ENCODE measurements at regions of chr4 and their contacts with region 1.

Region 1: DNA sequence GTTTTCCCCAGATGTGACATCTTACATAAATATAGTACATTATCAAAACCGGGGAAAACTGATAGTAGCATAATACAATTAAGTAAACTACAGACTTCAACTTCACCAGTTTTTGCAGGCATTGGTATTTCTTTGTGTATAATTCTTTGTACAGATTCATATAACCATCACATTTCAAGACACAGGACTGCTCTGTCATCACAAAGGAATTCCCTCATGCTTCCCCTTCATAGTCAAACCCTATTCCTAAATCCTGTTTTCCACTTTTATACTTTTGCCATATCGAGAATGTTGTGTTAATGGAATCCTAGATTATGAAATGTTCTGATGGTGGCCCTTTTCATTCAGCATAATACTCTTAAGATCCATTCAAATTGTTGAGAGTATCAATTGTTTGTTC is 36.0 kb downstream of the STIM2 start:
- DNase-seq: no peak
- ATAC-seq: no peak
- H3K4me3 ChIP-seq: no peak overlapping the region
- H3K4me3 Mint-ChIP-seq: no peak overlapping the region
- H3K27ac ChIP-seq: no peak overlapping the region
- H3K27ac Mint-ChIP-seq: no peak overlapping the region
- H3K4me1 ChIP-seq: peaks cover 25% of the 10 kb centered on the region
- H3K4me1 Mint-ChIP-seq: peaks cover 69% of the 10 kb centered on the region
- H3K27me3 ChIP-seq: no peaks in the 10 kb centered on the region
- H3K27me3 Mint-ChIP-seq: no peaks in the 10 kb centered on the region
- CTCF ChIP-seq: no peak

Region 2: GRCh38 chr4:26217961-26218676 is 678.5 kb before region 1 on chr4:
- CTCF ChIA-PET with region 1: no interaction called
- POLR2A ChIA-PET with region 1: no interaction called
- intact Hi-C with region 1: no loop called
- DNase-seq: peak in 1 of 9 experiments; percentile 26
- ATAC-seq: no peak
- H3K4me3 ChIP-seq: no peak overlapping the region
- H3K4me3 Mint-ChIP-seq: no peak overlapping the region
- H3K27ac ChIP-seq: no peak overlapping the region
- H3K27ac Mint-ChIP-seq: no peak overlapping the region
- H3K4me1 ChIP-seq: no peaks in the 10 kb centered on the region
- H3K4me1 Mint-ChIP-seq: peaks cover 5% of the 10 kb centered on the region
- H3K27me3 ChIP-seq: no peaks in the 10 kb centered on the region
- H3K27me3 Mint-ChIP-seq: peaks cover 5% of the 10 kb centered on the region
- CTCF ChIP-seq: no peak

Region 3: GRCh38 chr4:26687728-26688127 is 208.9 kb before region 1 on chr4:
- CTCF ChIA-PET with region 1: no interaction called
- POLR2A ChIA-PET with region 1: interaction called, 12 read pairs
- intact Hi-C with region 1: no loop called
- DNase-seq: no peak
- ATAC-seq: no peak
- H3K4me3 ChIP-seq: no peak overlapping the region
- H3K4me3 Mint-ChIP-seq: no peak overlapping the region
- H3K27ac ChIP-seq: no peak overlapping the region
- H3K27ac Mint-ChIP-seq: no peak overlapping the region
- H3K4me1 ChIP-seq: no peaks in the 10 kb centered on the region
- H3K4me1 Mint-ChIP-seq: no peaks in the 10 kb centered on the region
- H3K27me3 ChIP-seq: no peaks in the 10 kb centered on the region
- H3K27me3 Mint-ChIP-seq: no peaks in the 10 kb centered on the region
- CTCF ChIP-seq: no peak

Region 4: GRCh38 chr4:26867914-26868684 is 28.5 kb before region 1 on chr4:
- CTCF ChIA-PET with region 1: no interaction called
- POLR2A ChIA-PET with region 1: no interaction called
- intact Hi-C with region 1: loop called (anchors 5 kb)
- DNase-seq: no peak
- ATAC-seq: no peak
- H3K4me3 ChIP-seq: no peak overlapping the region
- H3K4me3 Mint-ChIP-seq: peak overlapping the region; percentile 55
- H3K27ac ChIP-seq: peak overlapping the region in 1 of 2 experiments; percentile 24
- H3K27ac Mint-ChIP-seq: peak overlapping the region; percentile 50
- H3K4me1 ChIP-seq: peaks cover 87% of the 10 kb centered on the region
- H3K4me1 Mint-ChIP-seq: peaks cover 89% of the 10 kb centered on the region
- H3K27me3 ChIP-seq: no peaks in the 10 kb centered on the region
- H3K27me3 Mint-ChIP-seq: no peaks in the 10 kb centered on the region
- CTCF ChIP-seq: no peak

Region 5: GRCh38 chr4:26885912-26886274 is 10.7 kb before region 1 on chr4:
- CTCF ChIA-PET with region 1: interaction called, 6 read pairs
- POLR2A ChIA-PET with region 1: interaction called, 5 read pairs
- intact Hi-C with region 1: loop called in 1 of 2 experiments (anchors 1 kb)
- DNase-seq: peak in 4 of 9 experiments; percentile 39 to 89 (median 63)
- ATAC-seq: peak; percentile 67
- H3K4me3 ChIP-seq: peak overlapping the region; percentile 6 to 38
- H3K4me3 Mint-ChIP-seq: peak overlapping the region; percentile 81
- H3K27ac ChIP-seq: peak overlapping the region; percentile 68 to 92
- H3K27ac Mint-ChIP-seq: peak overlapping the region; percentile 97
- H3K4me1 ChIP-seq: peaks cover 57% of the 10 kb centered on the region
- H3K4me1 Mint-ChIP-seq: peaks cover 80% of the 10 kb centered on the region
- H3K27me3 ChIP-seq: no peaks in the 10 kb centered on the region
- H3K27me3 Mint-ChIP-seq: no peaks in the 10 kb centered on the region
- CTCF ChIP-seq: no peak

Region 6: DNA sequence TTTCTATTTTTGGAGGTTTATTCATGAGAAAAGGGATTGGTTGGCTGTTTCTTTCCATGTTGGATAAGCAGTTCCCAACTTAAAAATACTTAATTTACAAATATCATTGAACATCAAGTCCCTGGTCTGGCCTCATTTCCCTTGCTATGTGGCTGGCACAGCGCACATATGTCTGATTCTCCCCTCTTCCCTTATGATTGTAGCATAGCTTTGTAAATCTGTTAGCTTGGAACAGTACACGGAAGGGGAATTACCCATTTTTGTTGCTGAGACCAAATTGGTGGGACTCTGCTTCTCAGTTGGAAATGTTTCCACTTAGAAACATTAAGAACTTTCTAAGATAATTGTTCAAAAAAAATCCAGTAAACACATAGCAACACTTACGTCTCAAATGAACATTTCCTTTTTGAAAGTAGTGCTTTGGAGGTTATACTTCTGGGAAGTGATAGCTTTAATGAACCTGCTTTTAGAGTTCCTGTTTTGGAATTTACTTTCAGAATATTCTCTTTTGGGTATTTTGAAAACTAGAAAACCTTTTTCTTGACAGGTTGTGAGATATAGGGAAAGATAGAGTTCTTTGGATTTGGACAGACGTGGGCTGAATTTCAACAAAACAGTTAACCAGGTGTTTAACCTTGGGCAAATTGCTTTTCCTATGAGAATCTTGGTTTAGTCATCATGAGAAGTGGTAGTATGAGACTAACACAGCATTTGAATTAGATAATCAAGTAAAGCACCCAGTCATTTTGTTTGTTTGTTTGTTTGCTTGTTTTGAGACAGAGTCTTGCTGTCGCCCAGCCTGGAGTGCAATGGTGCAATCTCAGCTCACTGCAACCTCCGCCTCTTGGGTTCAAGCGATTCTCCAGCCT is 11.3 kb after region 1 on chr4:
- CTCF ChIA-PET with region 1: no interaction called
- POLR2A ChIA-PET with region 1: no interaction called
- intact Hi-C with region 1: loop called in 1 of 2 experiments (anchors 1 kb)
- DNase-seq: no peak
- ATAC-seq: no peak
- H3K4me3 ChIP-seq: no peak overlapping the region
- H3K4me3 Mint-ChIP-seq: no peak overlapping the region
- H3K27ac ChIP-seq: no peak overlapping the region
- H3K27ac Mint-ChIP-seq: peak overlapping the region; percentile 18
- H3K4me1 ChIP-seq: peaks cover 50% of the 10 kb centered on the region
- H3K4me1 Mint-ChIP-seq: peaks cover 82% of the 10 kb centered on the region
- H3K27me3 ChIP-seq: no peaks in the 10 kb centered on the region
- H3K27me3 Mint-ChIP-seq: no peaks in the 10 kb centered on the region
- CTCF ChIP-seq: no peak

Region 7: DNA sequence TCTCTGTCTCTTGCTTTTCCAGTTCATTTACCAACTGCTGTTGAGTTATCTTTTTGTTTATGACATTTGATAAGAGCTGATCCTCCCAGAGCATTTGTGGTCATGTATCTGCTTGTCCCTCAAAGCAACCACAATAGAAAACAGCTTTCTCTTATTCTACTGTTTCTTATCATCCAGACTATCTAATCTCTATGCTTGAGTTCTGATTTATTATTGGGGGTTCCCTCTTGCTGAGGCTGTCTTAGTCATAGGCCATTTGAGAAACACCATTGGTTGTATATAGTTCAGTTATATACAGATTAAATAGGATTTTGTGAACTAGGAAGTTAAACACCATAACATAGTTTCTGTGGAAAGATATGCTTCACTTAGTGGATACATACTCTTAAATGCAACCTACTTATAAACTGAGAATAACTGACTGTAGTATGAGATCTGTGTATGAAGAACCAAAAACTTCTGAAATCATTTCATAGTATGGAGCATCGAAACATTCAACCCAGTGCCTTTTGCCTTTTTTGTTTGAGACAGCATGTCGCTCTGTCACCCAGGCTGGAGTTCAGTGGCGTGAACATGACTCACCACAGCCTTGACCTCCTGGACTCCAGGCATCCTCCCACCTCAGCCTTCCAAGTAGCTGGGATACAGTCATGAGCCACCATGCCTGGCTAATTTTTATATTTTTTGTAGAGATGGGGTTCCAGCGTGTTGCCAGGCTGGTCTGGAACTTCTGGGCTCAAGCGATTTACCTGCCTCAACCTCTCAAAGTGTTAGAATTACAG is 39.8 kb after region 1 on chr4:
- CTCF ChIA-PET with region 1: no interaction called
- POLR2A ChIA-PET with region 1: no interaction called
- intact Hi-C with region 1: loop called in 1 of 2 experiments (anchors 5 kb)
- DNase-seq: peak in 2 of 9 experiments; percentile 13 to 34
- ATAC-seq: peak; percentile 62
- H3K4me3 ChIP-seq: no peak overlapping the region
- H3K4me3 Mint-ChIP-seq: no peak overlapping the region
- H3K27ac ChIP-seq: no peak overlapping the region
- H3K27ac Mint-ChIP-seq: peak overlapping the region; percentile 15
- H3K4me1 ChIP-seq: peaks cover 47% of the 10 kb centered on the region
- H3K4me1 Mint-ChIP-seq: peaks cover 74% of the 10 kb centered on the region
- H3K27me3 ChIP-seq: no peaks in the 10 kb centered on the region
- H3K27me3 Mint-ChIP-seq: no peaks in the 10 kb centered on the region
- CTCF ChIP-seq: no peak

Region 8: DNA sequence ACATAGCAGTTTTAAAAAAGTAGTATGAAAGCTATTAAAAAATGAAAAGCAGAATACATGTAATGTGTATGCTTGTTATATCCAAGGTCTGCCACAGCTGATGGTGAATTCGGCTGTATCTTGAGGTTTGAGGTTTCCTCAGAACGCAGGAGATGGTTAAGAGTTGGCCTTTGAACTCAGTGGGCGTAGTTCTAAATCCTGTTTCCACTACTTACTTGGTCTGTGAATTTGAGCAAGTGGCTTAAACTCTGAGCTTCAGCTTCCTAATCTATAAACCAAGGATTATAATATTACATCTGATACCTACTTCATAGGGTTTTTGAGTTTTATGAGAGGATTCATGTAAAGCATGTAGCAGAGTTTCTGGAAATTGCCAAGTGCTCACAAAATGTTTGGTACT is 89.2 kb after region 1 on chr4:
- CTCF ChIA-PET with region 1: no interaction called
- POLR2A ChIA-PET with region 1: interaction called, 4 read pairs
- intact Hi-C with region 1: loop called in 1 of 2 experiments (anchors 5 kb)
- DNase-seq: peak in 4 of 9 experiments; percentile 34 to 77 (median 50)
- ATAC-seq: peak; percentile 80
- H3K4me3 ChIP-seq: no peak overlapping the region
- H3K4me3 Mint-ChIP-seq: no peak overlapping the region
- H3K27ac ChIP-seq: peak overlapping the region in 1 of 2 experiments; percentile 12
- H3K27ac Mint-ChIP-seq: no peak overlapping the region
- H3K4me1 ChIP-seq: peaks cover 26% of the 10 kb centered on the region
- H3K4me1 Mint-ChIP-seq: peaks cover 61% of the 10 kb centered on the region
- H3K27me3 ChIP-seq: no peaks in the 10 kb centered on the region
- H3K27me3 Mint-ChIP-seq: no peaks in the 10 kb centered on the region
- CTCF ChIP-seq: no peak